ENCODE measurements at regions of chr11 and their contacts with region 1.

Region 1: DNA sequence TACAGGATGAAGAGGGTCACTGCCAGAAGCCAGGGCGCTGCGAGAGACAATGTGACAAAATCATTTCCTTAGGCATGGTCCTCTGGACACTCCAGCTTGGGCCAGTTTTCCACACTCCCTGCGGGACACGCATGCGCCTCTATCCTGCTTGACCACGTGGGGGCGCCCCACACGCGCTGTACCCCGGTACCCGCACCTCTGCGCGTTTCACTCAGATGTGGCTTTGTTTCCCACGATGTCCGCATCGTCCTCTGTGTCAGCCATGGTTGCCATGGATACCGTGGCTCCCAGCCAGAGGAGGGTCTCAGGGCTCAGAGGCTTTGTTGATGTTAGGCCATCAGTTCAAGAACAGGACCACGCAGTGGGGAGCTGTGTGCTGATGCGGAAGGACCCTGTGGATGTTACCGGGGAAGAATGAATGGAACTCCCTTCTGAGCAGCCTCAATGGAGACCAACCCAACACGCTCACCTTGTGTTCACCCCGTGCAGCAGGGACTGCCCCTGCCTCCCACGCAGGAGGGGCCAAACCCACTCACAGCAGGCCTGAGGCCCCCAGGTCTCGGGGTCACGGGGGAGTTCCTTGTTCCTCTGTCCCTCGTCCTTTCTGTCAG is 101.1 kb upstream of the SLC22A12 start:
- DNase-seq: peak in 1 of 2 experiments; percentile 63
- H3K4me3 ChIP-seq: no peak overlapping the region
- H3K27ac ChIP-seq: no peak overlapping the region
- H3K4me1 ChIP-seq: no peaks in the 10 kb centered on the region
- H3K27me3 ChIP-seq: peaks cover 94% of the 10 kb centered on the region
- CTCF ChIP-seq: peak; percentile 72

Region 2: GRCh38 chr11:64500176-64501013 is 10.5 kb after region 1 on chr11:
- CTCF ChIA-PET with region 1: interaction called, 11 read pairs
- POLR2A ChIA-PET with region 1: no interaction called
- intact Hi-C with region 1: no loop called
- DNase-seq: no peak
- H3K4me3 ChIP-seq: no peak overlapping the region
- H3K27ac ChIP-seq: no peak overlapping the region
- H3K4me1 ChIP-seq: no peaks in the 10 kb centered on the region
- H3K27me3 ChIP-seq: peaks cover 91% of the 10 kb centered on the region
- CTCF ChIP-seq: no peak

Region 3: DNA sequence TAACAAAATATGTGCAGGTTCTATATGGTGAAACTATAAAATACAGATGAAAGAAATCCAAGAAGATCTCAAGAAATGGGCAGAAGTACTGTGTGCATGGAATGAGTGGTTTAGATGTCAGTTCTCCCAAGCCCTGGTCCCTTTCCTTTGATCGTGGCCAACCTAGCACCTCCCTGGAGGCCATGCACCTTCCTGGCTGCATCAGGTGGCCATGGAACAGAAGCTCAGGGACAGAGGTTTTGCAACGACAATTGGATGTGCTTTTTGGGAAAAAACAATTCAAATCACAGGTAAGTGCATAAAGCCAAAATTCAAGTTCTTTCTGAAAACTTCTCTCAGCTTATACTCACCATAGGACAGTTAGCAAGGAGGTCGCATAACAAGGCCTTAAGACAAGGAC is 47.1 kb after region 1 on chr11:
- CTCF ChIA-PET with region 1: interaction called, 13 read pairs
- POLR2A ChIA-PET with region 1: no interaction called
- intact Hi-C with region 1: no loop called
- DNase-seq: no peak
- H3K4me3 ChIP-seq: no peak overlapping the region
- H3K27ac ChIP-seq: no peak overlapping the region
- H3K4me1 ChIP-seq: peaks cover 6% of the 10 kb centered on the region; the same call in 1 of the 2 replicates
- H3K27me3 ChIP-seq: peaks cover 43% of the 10 kb centered on the region
- CTCF ChIP-seq: no peak